GM12878 (cell line): ENCODE measurements at regions of chr11 and their contacts with region 1.

Region 1: GRCh38 chr11:60265373-60266214 is 14.9 kb upstream of the MS4A4A start:
- DNase-seq: peak; percentile 44
- ATAC-seq: peak; percentile 76
- H3K4me3 ChIP-seq: no peak overlapping the region
- H3K27ac ChIP-seq: no peak overlapping the region
- H3K4me1 ChIP-seq: no peaks in the 10 kb centered on the region
- H3K27me3 ChIP-seq: no peaks in the 10 kb centered on the region
- CTCF ChIP-seq: peak; percentile 49 to 80 (median 74); a peak in 5 of 6 replicates
- EP300 ChIP-seq: no peak
- POLR2A ChIP-seq: no peak
- RAD21 ChIP-seq: peak; percentile 96

Region 2: GRCh38 chr11:60280412-60280811 is 14.8 kb after region 1 on chr11 and contains the start of gene MS4A4A:
- CTCF ChIA-PET with region 1: interaction called, 20 read pairs
- POLR2A ChIA-PET with region 1: no interaction called
- RAD21 ChIA-PET with region 1: interaction called, 11 read pairs
- SMC1A ChIA-PET with region 1: interaction called, 17 read pairs
- in situ Hi-C with region 1: no loop called
- intact Hi-C with region 1: no loop called
- DNase-seq: no peak
- ATAC-seq: peak; percentile 61
- H3K4me3 ChIP-seq: no peak within 1 kb of the TSS
- H3K27ac ChIP-seq: no peak within 1 kb of the TSS
- H3K4me1 ChIP-seq: no peaks in the 10 kb centered on the region
- H3K27me3 ChIP-seq: no peaks in the 10 kb centered on the region
- CTCF ChIP-seq: no peak
- EP300 ChIP-seq: no peak
- POLR2A ChIP-seq: no peak
- RAD21 ChIP-seq: no peak
- polyA plus RNA-seq, gene MS4A4A: 1.8 to 2.4 TPM

Region 3: DNA sequence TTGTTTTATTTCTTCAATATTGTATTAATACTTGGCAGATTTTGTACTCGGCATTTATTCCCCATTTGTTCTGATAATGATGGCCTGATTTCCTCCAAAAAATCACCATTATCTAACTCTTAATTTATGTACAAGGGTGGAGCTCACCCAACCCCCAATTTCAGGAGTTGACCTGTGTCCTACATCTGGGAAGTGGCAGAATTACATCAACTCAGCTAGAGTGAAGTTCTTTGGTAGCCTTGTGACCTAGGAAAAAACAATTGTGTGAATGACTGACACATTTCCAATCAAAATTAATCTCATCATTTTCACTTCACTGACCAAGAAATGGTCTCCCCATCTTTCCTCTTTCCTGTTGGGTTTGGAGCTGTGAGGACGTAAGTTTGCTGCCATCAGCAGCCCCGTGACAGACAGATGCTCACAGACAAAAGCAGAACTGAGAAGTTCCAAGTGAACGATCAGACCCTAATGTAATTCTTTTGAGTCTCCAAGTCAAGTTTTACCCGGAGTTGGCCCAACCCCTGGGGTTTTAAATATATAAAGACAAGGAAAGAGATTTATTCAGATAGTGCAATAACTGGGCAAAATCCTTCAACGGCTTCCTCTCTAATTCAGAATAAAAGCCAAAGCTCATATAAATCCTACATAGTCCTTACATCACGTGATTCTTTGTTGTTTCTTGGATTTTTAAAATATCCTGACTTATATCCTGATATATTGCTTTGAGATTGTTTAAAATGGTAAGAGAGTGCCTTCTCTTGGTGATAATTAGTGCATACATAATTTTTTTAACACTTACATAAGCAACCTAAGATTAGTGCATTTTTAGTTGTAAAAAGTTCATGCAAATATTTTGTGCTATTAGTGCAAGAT is 45.0 kb after region 1 on chr11:
- CTCF ChIA-PET with region 1: interaction called, 15 read pairs
- POLR2A ChIA-PET with region 1: no interaction called
- RAD21 ChIA-PET with region 1: interaction called, 11 read pairs
- SMC1A ChIA-PET with region 1: interaction called, 11 read pairs
- in situ Hi-C with region 1: no loop called
- intact Hi-C with region 1: loop called (anchors 1 kb)
- DNase-seq: peak; percentile 64
- ATAC-seq: peak; percentile 82
- H3K4me3 ChIP-seq: no peak overlapping the region
- H3K27ac ChIP-seq: peak overlapping the region; percentile 64
- H3K4me1 ChIP-seq: peaks cover 18% of the 10 kb centered on the region
- H3K27me3 ChIP-seq: no peaks in the 10 kb centered on the region
- CTCF ChIP-seq: no peak
- EP300 ChIP-seq: peak; percentile 94 to 95; a peak in 3 of 4 replicates
- POLR2A ChIP-seq: no peak
- RAD21 ChIP-seq: no peak

Region 4: DNA sequence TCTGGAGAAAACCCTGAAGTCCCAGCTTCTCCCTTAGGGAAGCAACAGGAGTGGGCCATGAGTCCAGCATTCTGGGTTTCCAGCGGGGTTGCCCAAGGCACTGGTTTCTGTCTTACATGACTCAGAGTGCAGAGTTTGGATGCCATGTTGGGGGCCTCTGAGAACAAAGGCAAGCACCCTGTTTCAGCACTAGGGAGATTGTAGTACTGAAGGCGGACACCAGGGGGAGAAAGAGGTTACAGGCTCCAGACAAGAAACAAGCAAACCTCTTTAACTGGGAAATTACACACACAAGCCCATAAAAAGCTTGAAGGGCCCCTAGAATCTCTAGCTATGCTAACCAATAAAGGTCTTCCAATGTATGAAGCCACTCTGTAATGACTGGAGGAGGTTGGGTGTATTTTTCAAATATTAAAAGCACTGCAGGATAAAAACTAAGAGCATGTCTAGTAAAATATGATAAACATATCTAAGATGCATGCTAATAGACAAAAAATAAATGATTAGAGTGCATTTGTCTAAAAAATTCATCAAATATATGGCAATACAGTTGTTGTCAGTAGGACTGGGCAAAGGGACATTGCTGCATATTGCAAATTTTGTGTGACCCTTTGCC is 68.5 kb after region 1 on chr11:
- CTCF ChIA-PET with region 1: interaction called, 58 read pairs
- POLR2A ChIA-PET with region 1: no interaction called
- RAD21 ChIA-PET with region 1: interaction called, 13 read pairs
- SMC1A ChIA-PET with region 1: interaction called, 30 read pairs
- in situ Hi-C with region 1: no loop called
- intact Hi-C with region 1: no loop called
- DNase-seq: no peak
- ATAC-seq: peak; percentile 65
- H3K4me3 ChIP-seq: no peak overlapping the region
- H3K27ac ChIP-seq: no peak overlapping the region
- H3K4me1 ChIP-seq: peaks cover 22% of the 10 kb centered on the region
- H3K27me3 ChIP-seq: no peaks in the 10 kb centered on the region
- CTCF ChIP-seq: peak; percentile 73 to 86 (median 74)
- EP300 ChIP-seq: no peak
- POLR2A ChIP-seq: no peak
- RAD21 ChIP-seq: peak; percentile 67

Region 5: DNA sequence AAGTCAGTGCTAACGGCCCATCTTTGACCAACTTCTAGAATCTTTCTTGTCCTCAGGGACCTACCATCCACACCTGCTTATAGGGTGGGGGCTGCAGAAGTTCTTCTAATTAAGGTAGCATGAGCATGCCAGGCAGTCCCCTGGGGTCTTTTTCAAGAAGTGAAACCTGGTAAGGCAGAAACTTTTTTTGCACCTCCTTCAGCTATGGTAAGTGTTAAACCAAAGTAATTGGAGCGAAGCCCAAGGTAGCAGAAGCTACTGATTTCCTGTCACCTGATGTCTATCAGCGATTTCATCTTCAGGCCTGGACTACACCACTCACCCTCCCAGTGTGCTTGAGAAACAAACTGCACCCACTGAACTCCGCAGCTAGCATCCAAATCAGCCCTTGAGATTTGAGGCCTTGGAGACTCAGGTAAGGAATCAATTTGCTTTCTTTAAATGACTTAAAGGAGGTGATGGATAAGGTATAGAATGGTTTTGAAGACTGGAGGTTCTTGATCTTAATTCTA is 190.0 kb after region 1 on chr11 and contains the start of gene MS4A1:
- CTCF ChIA-PET with region 1: interaction called, 12 read pairs
- POLR2A ChIA-PET with region 1: no interaction called
- RAD21 ChIA-PET with region 1: no interaction called
- SMC1A ChIA-PET with region 1: interaction called, 3 read pairs
- in situ Hi-C with region 1: no loop called
- intact Hi-C with region 1: no loop called
- DNase-seq: peak; percentile 98
- ATAC-seq: peak; percentile 82
- H3K4me3 ChIP-seq: peak within 1 kb of the TSS; percentile 89
- H3K27ac ChIP-seq: peak within 1 kb of the TSS; percentile 93
- H3K4me1 ChIP-seq: peaks cover 21% of the 10 kb centered on the region
- H3K27me3 ChIP-seq: no peaks in the 10 kb centered on the region
- CTCF ChIP-seq: no peak
- EP300 ChIP-seq: peak; percentile 98 to 99
- POLR2A ChIP-seq: peak; percentile 90
- RAD21 ChIP-seq: 0 out of 2 replicates have a peak, but pooled peaks have one; percentile 14
- polyA plus RNA-seq, gene MS4A1: 730 to 1,013 TPM

Region 6: GRCh38 chr11:60615497-60615896 is 349.9 kb after region 1 on chr11:
- CTCF ChIA-PET with region 1: interaction called, 35 read pairs
- POLR2A ChIA-PET with region 1: no interaction called
- RAD21 ChIA-PET with region 1: interaction called, 18 read pairs
- SMC1A ChIA-PET with region 1: interaction called, 11 read pairs
- in situ Hi-C with region 1: no loop called
- intact Hi-C with region 1: loop called (anchors 1 kb)
- DNase-seq: no peak
- ATAC-seq: no peak
- H3K4me3 ChIP-seq: no peak overlapping the region
- H3K27ac ChIP-seq: no peak overlapping the region
- H3K4me1 ChIP-seq: no peaks in the 10 kb centered on the region
- H3K27me3 ChIP-seq: no peaks in the 10 kb centered on the region
- CTCF ChIP-seq: no peak
- EP300 ChIP-seq: no peak
- POLR2A ChIP-seq: no peak
- RAD21 ChIP-seq: no peak

Region 7: DNA sequence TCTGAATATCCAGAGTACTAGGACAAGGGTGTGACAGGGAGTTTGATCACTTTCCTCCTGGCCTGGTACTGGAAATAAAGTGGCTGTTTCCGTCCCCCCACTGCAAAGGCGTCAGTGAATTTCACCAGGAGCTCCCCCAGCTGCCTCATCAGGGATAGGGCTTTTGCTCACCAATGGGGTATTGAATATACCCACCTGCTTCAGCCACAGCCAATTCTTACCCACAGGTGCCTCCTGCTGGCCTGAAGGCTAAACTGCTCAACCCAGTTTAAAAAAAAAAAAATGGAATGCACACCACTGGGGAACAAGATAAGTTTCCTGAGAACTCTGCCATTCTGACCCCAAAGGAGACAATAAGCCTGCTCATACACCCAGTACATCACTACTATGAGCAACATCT is 368.5 kb after region 1 on chr11:
- CTCF ChIA-PET with region 1: interaction called, 26 read pairs
- POLR2A ChIA-PET with region 1: no interaction called
- RAD21 ChIA-PET with region 1: interaction called, 7 read pairs
- SMC1A ChIA-PET with region 1: interaction called, 17 read pairs
- in situ Hi-C with region 1: no loop called
- intact Hi-C with region 1: loop called (anchors 5 kb)
- DNase-seq: peak; percentile 19
- ATAC-seq: peak; percentile 85
- H3K4me3 ChIP-seq: no peak overlapping the region
- H3K27ac ChIP-seq: 0 out of 2 replicates have a peak overlapping the region, but pooled peaks have one; percentile 2
- H3K4me1 ChIP-seq: peaks cover 27% of the 10 kb centered on the region
- H3K27me3 ChIP-seq: no peaks in the 10 kb centered on the region
- CTCF ChIP-seq: peak; percentile 43 to 60 (median 56)
- EP300 ChIP-seq: no peak
- POLR2A ChIP-seq: no peak
- RAD21 ChIP-seq: peak; percentile 76

Region 8: GRCh38 chr11:60672255-60672654 is 406.7 kb after region 1 on chr11:
- CTCF ChIA-PET with region 1: no interaction called
- POLR2A ChIA-PET with region 1: no interaction called
- RAD21 ChIA-PET with region 1: no interaction called
- SMC1A ChIA-PET with region 1: no interaction called
- in situ Hi-C with region 1: no loop called
- intact Hi-C with region 1: no loop called
- DNase-seq: no peak
- ATAC-seq: no peak
- H3K4me3 ChIP-seq: no peak overlapping the region
- H3K27ac ChIP-seq: no peak overlapping the region
- H3K4me1 ChIP-seq: no peaks in the 10 kb centered on the region
- H3K27me3 ChIP-seq: no peaks in the 10 kb centered on the region
- CTCF ChIP-seq: no peak
- EP300 ChIP-seq: no peak
- POLR2A ChIP-seq: no peak
- RAD21 ChIP-seq: no peak